ENCODE measurements at regions of chr10 and their contacts with region 1.

Region 1: GRCh38 chr10:73096449-73097304 is at the start of gene P4HA1:
- DNase-seq: peak; percentile 100
- ATAC-seq: peak; percentile 91
- H3K4me3 Mint-ChIP-seq: peak within 1 kb of the TSS; percentile 86
- H3K27ac Mint-ChIP-seq: peak within 1 kb of the TSS; percentile 97
- H3K4me1 Mint-ChIP-seq: peaks cover 27% of the 10 kb centered on the region
- H3K27me3 Mint-ChIP-seq: no peaks in the 10 kb centered on the region
- total RNA-seq, gene P4HA1: 51.8 to 58.5 TPM

Region 2: DNA sequence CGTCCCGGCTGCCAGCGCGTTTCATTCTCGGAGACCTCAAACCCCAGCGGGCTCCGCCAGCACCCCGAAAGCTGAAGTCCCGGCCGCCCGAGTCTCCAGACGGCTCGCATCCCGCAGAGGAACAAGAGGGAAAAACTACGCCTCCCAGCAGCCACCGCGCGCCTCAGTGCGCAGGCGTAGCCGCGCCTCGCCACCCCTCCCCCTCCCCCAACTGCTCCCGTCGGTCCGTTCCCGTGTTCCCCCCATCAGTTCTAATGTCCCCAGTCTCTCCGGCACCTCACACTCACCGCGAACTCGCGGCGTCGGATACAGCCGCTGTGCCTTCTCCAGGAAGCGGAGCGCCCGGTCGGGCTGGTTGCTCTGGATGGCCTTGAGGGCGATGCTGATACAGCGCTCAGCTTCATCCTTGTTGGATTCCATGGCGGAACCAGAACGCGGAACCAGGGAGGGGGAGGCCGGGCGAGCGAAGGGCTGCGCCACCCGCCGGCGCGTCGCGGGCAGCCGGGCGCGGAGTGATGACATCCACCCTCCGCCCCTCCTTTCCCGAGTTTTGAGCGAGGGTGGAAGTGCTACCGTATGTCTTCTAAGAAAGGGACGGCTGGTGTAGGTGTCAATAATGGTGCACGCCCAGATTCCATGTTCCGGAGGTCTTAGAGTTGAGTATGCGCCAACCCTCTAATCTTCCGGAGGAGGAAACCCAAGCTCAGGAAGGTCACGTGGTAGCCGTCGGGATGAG is 742.0 kb before region 1 on chr10 and contains the start of gene DNAJB12:
- CTCF ChIA-PET with region 1: no interaction called
- POLR2A ChIA-PET with region 1: no interaction called
- intact Hi-C with region 1: loop called in 1 of 2 experiments (anchors 2 kb)
- DNase-seq: peak; percentile 93
- ATAC-seq: peak; percentile 83
- H3K4me3 Mint-ChIP-seq: peak within 1 kb of the TSS; percentile 82
- H3K27ac Mint-ChIP-seq: peak within 1 kb of the TSS; percentile 98
- H3K4me1 Mint-ChIP-seq: peaks cover 35% of the 10 kb centered on the region
- H3K27me3 Mint-ChIP-seq: no peaks in the 10 kb centered on the region
- total RNA-seq, gene DNAJB12: 19.7 to 21.9 TPM

Region 3: GRCh38 chr10:73060738-73061635 is 35.7 kb before region 1 on chr10:
- CTCF ChIA-PET with region 1: interaction called, 7 read pairs
- POLR2A ChIA-PET with region 1: no interaction called
- intact Hi-C with region 1: loop called in 1 of 2 experiments (anchors 5 kb)
- DNase-seq: no peak
- ATAC-seq: peak; percentile 81
- H3K4me3 Mint-ChIP-seq: no peak overlapping the region
- H3K27ac Mint-ChIP-seq: no peak overlapping the region
- H3K4me1 Mint-ChIP-seq: peaks cover 17% of the 10 kb centered on the region
- H3K27me3 Mint-ChIP-seq: no peaks in the 10 kb centered on the region

Region 4: GRCh38 chr10:73167783-73168464 is 71.2 kb after region 1 on chr10 and contains the starts of genes ECD and FAM149B1:
- CTCF ChIA-PET with region 1: interaction called, 21 read pairs
- POLR2A ChIA-PET with region 1: interaction called, 5 read pairs
- intact Hi-C with region 1: loop called (anchors 1 to 2 kb)
- DNase-seq: peak; percentile 96
- ATAC-seq: peak; percentile 94
- H3K4me3 Mint-ChIP-seq: peak within 1 kb of the TSS; percentile 100
- H3K27ac Mint-ChIP-seq: peak within 1 kb of the TSS; percentile 100
- H3K4me1 Mint-ChIP-seq: peaks cover 37% of the 10 kb centered on the region
- H3K27me3 Mint-ChIP-seq: no peaks in the 10 kb centered on the region
- total RNA-seq, gene ECD: 41.0 to 50.7 TPM
- total RNA-seq, gene FAM149B1: 16.0 to 18.6 TPM

Region 5: DNA sequence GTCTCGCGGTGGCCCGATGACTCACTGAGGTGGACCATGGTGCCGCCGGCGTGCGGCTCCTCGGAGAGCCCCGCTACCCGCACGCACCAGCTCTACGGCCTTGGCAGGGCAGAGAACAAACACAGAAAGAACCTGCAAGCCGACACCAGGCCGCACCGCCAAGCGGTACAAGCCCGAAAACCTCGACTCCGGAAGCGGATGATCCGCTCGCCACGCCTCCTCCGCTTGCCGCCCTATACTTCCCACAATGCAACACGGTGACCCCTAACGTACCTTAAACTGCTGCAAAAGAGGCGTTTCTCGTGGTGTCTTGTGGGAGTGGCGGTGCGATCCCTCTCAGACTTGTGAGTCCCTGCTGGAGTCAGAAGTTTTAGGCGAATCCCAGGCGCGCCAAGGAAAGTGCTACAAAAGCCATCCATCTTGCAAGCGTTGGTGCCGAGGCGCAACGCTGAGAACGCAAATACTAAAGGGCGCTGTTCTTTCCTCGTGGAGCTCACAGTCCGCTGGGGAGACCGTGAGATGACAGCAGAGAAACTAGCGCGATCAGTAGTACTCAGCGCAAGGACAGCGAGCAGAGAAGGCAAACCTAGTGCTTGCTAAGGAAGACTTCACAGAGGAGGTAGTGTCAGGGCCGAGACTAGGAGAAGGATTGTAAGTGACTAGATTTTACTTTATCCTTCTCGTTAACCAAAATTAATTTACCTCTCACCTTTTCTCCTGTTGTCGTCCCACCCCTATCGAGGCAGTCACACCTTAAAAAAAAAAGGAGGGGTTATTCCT is 156.0 kb after region 1 on chr10 and contains the start of gene MRPS16:
- CTCF ChIA-PET with region 1: interaction called, 3 read pairs
- POLR2A ChIA-PET with region 1: interaction called, 16 read pairs
- intact Hi-C with region 1: loop called (anchors 1 to 5 kb)
- DNase-seq: peak; percentile 95
- ATAC-seq: peak; percentile 84
- H3K4me3 Mint-ChIP-seq: peak within 1 kb of the TSS; percentile 94
- H3K27ac Mint-ChIP-seq: peak within 1 kb of the TSS; percentile 98
- H3K4me1 Mint-ChIP-seq: peaks cover 32% of the 10 kb centered on the region
- H3K27me3 Mint-ChIP-seq: no peaks in the 10 kb centered on the region
- total RNA-seq, gene MRPS16: 123 to 138 TPM

Region 6: DNA sequence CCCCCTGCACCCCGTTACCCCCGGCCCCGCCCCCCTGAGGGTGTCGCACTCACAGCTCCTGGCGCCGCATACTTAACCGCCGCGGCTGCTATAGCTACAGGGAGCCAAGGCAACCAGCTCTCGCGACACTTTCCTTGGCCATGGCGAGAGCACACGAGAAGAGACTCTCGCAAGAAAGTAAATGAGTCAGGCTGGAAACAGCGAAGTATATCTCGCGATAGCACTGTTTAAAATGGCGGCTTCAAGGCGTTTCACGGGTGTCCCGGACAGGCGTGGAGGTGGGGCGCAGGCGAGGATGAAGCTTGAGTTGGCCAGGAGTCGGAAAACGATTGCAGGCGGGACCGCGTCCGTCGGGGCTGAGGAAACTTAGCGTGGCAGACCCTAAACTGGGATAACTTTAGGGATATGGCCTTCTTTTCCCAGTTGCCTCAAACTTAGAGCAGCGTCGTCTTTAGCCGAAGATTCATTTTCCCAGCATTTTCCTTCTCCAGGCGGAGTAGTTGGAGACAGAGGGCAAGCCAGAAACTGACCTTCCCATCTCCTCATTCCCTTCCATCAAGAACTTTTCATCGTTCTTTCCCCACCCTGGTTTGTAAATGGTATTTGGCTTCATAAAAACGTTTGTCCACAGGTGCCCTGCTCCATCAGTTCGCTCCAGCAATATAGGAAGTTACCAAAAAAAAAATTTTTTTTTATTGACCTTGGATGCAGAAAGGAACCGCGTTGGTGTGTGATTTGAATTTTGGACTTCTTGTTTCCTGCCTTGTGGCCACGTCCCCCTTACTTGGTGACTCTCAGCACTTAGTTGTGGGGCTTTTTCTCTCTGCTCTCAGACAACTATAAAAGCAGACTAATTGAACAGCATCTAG is 529.4 kb after region 1 on chr10:
- CTCF ChIA-PET with region 1: no interaction called
- POLR2A ChIA-PET with region 1: interaction called, 7 read pairs
- intact Hi-C with region 1: loop called in 1 of 2 experiments (anchors 1 kb)
- DNase-seq: peak; percentile 97
- ATAC-seq: peak; percentile 99
- H3K4me3 Mint-ChIP-seq: peak overlapping the region; percentile 96
- H3K27ac Mint-ChIP-seq: peak overlapping the region; percentile 98
- H3K4me1 Mint-ChIP-seq: peaks cover 19% of the 10 kb centered on the region
- H3K27me3 Mint-ChIP-seq: no peaks in the 10 kb centered on the region

Region 7: GRCh38 chr10:73810735-73811465 is 714.2 kb after region 1 on chr10:
- CTCF ChIA-PET with region 1: no interaction called
- POLR2A ChIA-PET with region 1: no interaction called
- intact Hi-C with region 1: loop called in 1 of 2 experiments (anchors 1 kb)
- DNase-seq: peak; percentile 72
- ATAC-seq: peak; percentile 22
- H3K4me3 Mint-ChIP-seq: peak overlapping the region; percentile 78
- H3K27ac Mint-ChIP-seq: peak overlapping the region; percentile 91
- H3K4me1 Mint-ChIP-seq: peaks cover 42% of the 10 kb centered on the region
- H3K27me3 Mint-ChIP-seq: no peaks in the 10 kb centered on the region

Measured in activated CD4-positive, alpha-beta T cell treated with anti-CD3 and anti-CD28 coated beads for 36 hours (primary cell).